ENCODE measurements at regions of chr12 and their contacts with region 1.

Region 1: GRCh38 chr12:48795480-48796455 is 6.9 kb upstream of the ADCY6 start:
- DNase-seq: peak; percentile 47
- ATAC-seq: peak; percentile 92

Region 2: GRCh38 chr12:48454667-48455066 is 341.1 kb before region 1 on chr12:
- intact Hi-C with region 1: no loop called
- DNase-seq: no peak
- ATAC-seq: no peak

Region 3: DNA sequence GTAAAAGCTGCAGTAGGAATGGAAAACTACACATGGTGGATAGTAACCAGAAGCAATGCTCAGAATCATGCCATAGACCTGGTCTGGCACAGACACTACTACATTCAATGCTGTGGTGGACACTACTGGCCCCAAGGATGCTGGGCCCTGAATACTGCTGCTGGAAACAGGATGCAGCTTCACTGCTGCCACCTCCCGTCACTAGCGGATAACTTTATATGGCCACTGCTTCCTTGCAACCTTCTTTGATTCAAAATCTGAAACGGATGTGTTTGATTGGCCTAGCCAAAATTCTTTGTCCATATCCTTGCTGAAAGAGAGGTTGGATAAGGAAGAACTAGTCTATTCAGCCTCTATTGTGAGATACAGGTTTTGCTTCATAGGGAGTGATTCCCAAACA is 37.5 kb before region 1 on chr12:
- intact Hi-C with region 1: loop called (anchors 2 kb)
- DNase-seq: no peak
- ATAC-seq: no peak

Region 4: DNA sequence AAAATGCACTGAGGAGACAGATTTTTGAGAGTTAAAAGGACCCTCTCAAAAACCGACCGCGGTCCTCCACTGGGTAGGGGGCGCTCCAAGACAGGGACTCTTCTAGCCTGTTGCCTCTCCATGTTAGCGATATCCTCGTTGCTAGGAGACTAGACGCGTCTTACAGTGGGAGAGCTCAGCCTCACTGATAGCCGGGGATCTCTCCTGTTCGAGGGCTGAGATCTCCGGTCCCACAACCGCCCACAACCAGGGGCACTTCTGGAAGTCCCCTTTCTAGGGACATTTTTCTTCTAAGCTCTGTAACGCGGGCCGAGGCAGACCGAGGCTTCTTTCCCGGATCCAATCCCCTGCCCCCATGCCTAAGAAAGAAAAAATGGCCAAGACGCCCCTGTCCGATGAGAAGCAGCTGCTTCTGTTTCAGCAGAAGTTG is 108.2 kb after region 1 on chr12:
- intact Hi-C with region 1: no loop called
- DNase-seq: peak; percentile 79
- ATAC-seq: peak; percentile 87